ENCODE measurements at regions of chr3 and their contacts with region 1.

Region 1: DNA sequence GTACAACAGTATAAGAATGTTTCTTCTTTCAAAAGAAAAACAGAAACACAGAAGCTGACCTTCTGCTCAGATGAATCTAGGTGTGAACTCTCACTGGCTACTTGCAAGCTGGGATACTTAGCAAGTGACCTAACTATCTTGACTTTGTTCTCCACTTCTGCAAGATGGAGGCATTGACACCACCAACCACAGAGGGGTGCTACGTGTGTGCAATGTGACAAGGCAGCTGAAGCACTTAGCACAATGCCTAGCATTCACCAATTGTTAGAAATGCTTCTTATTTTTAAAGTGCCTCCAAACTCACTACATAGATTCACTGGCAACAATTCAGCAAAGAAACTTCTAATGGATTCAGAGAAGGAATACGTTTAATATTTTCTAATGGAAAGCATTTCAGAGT is 331.4 kb upstream of the WNT5A start:
- DNase-seq: no peak
- ATAC-seq: no peak
- H3K4me3 ChIP-seq: no peak overlapping the region
- H3K4me3 Mint-ChIP-seq: no peak overlapping the region
- H3K27ac ChIP-seq: no peak overlapping the region
- H3K27ac Mint-ChIP-seq: no peak overlapping the region
- H3K4me1 ChIP-seq: no peaks in the 10 kb centered on the region
- H3K4me1 Mint-ChIP-seq: no peaks in the 10 kb centered on the region
- H3K27me3 ChIP-seq: no peaks in the 10 kb centered on the region
- H3K27me3 Mint-ChIP-seq: no peaks in the 10 kb centered on the region
- CTCF ChIP-seq: no peak

Region 2: GRCh38 chr3:55144015-55144673 is 674.3 kb before region 1 on chr3:
- CTCF ChIA-PET with region 1: no interaction called
- POLR2A ChIA-PET with region 1: no interaction called
- intact Hi-C with region 1: loop called in 1 of 2 experiments (anchors 5 kb)
- DNase-seq: no peak
- ATAC-seq: no peak
- H3K4me3 ChIP-seq: no peak overlapping the region
- H3K4me3 Mint-ChIP-seq: no peak overlapping the region
- H3K27ac ChIP-seq: no peak overlapping the region
- H3K27ac Mint-ChIP-seq: no peak overlapping the region
- H3K4me1 ChIP-seq: no peaks in the 10 kb centered on the region
- H3K4me1 Mint-ChIP-seq: no peaks in the 10 kb centered on the region
- H3K27me3 ChIP-seq: no peaks in the 10 kb centered on the region
- H3K27me3 Mint-ChIP-seq: no peaks in the 10 kb centered on the region
- CTCF ChIP-seq: no peak

Measured in CD8-positive, alpha-beta T cell (primary cell).